Lower leg skin (tissue), 4 donors: ENCODE measurements at regions of chr4 and their contacts with region 1.

Region 1: GRCh38 chr4:168057412-168057811 is 34.9 kb upstream of the ANXA10 start:
- DNase-seq: no peak
- H3K4me3 ChIP-seq: no peak overlapping the region
- CTCF ChIP-seq: no peak
- POLR2A ChIP-seq: no peak

Region 2: GRCh38 chr4:168408620-168409019 is 351.2 kb after region 1 on chr4:
- intact Hi-C with region 1: no loop called
- DNase-seq: peak in 1 of 2 donors; percentile 54
- H3K4me3 ChIP-seq: no peak overlapping the region
- CTCF ChIP-seq: no peak
- POLR2A ChIP-seq: no peak

Region 3: DNA sequence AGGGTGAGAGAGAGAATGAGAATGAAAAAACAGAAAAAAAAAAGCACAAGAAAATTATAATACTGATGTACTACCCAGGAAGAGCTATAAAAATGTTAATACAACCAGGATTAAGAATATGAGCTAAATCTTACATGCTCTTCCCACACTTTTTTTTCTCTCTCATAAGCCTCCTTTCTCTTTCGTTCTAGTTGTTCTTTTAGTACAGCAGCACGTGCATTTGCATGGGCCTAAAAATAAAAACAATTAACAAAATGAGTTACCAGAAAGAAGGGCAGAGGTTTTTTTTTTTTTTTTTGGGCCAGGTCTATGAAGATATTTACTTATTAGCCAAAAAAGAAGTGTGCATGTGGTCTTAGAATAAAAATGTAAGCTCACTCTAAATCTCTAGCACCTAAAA is 1449.5 kb after region 1 on chr4:
- intact Hi-C with region 1: loop called (anchors 5 kb)
- DNase-seq: no peak
- H3K4me3 ChIP-seq: no peak overlapping the region
- CTCF ChIP-seq: no peak
- POLR2A ChIP-seq: no peak